ENCODE measurements at regions of chr6 and their contacts with region 1.

Region 1: GRCh38 chr6:135535989-135536414 is 38.5 kb upstream of the AHI1 start:
- DNase-seq: peak; percentile 88
- H3K4me3 ChIP-seq: no peak overlapping the region
- CTCF ChIP-seq: peak; percentile 31

Region 2: DNA sequence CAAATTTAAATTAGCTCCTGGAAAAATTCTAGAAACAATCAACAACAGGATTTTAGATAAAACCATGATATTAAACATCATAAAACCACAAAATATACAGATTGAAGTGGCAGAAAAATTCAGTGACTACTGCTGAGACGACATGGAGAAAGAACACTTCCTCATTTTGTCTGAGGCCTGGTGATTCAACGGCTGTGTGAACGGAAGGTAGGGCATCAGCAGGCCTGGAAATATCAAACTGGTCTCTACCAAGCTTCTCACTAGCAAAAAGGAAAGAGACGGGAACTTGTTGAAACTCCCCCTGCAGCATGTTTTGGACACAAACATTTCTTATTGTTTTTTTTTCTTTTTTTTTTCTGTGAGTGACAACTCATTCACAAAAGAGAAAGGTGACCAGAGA is 19.5 kb after region 1 on chr6:
- CTCF ChIA-PET with region 1: interaction called, 11 read pairs
- POLR2A ChIA-PET with region 1: no interaction called
- DNase-seq: no peak
- H3K4me3 ChIP-seq: no peak overlapping the region
- CTCF ChIP-seq: no peak

Region 3: DNA sequence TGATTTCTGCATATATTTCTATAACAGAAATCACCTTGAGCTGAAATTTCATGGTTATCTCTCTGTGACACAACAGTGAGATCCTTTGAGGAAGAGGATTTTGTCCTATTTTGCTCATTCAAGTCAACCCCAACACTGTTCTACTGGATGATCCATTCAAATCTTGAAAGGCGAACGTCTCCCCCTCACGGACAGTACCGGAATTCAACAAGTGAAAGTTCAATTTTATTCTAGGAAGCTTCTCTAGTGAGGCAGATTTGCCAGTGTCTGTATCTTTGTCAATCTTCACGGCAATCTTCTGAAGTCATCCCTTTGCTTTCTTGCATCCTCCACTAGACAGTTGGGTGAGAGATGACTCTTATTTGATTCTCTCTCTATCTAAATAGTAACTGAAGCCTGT is 223.8 kb after region 1 on chr6:
- CTCF ChIA-PET with region 1: interaction called, 17 read pairs
- POLR2A ChIA-PET with region 1: no interaction called
- DNase-seq: no peak
- H3K4me3 ChIP-seq: no peak overlapping the region
- CTCF ChIP-seq: no peak

Region 4: GRCh38 chr6:135851442-135852271 is 315.7 kb after region 1 on chr6 and contains the start of gene PDE7B:
- CTCF ChIA-PET with region 1: interaction called, 13 read pairs
- POLR2A ChIA-PET with region 1: interaction called, 3 read pairs
- DNase-seq: peak; percentile 97
- H3K4me3 ChIP-seq: peak within 1 kb of the TSS; percentile 66
- CTCF ChIP-seq: no peak

Region 5: GRCh38 chr6:135938576-135939207 is 402.7 kb after region 1 on chr6:
- CTCF ChIA-PET with region 1: interaction called, 19 read pairs
- POLR2A ChIA-PET with region 1: no interaction called
- DNase-seq: no peak
- H3K4me3 ChIP-seq: no peak overlapping the region
- CTCF ChIP-seq: peak; percentile 24

Region 6: GRCh38 chr6:136235217-136235532 is 699.2 kb after region 1 on chr6:
- CTCF ChIA-PET with region 1: interaction called, 18 read pairs
- POLR2A ChIA-PET with region 1: no interaction called
- DNase-seq: no peak
- H3K4me3 ChIP-seq: no peak overlapping the region
- CTCF ChIP-seq: no peak